HepG2 (cell line): ENCODE measurements at regions of chr6 and their contacts with region 1.

Region 1: DNA sequence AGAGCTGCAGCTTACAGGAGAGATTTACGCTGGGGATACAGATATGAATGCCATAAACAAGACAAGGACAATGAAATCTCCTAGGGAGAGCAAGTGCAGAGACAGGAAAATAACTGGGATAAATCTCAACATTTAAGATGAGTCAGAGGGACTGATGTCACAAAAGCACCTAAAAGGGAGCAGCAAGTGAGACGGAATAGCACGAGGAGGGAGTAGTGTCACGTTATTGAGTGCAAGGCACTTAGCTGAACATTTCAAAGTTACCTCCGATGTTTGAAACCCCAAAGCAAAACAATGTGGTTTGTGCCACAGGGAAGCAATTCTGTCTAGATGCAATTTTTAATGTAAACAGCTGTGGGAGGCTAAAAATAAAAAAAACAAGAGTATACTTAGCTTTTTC is 1131.7 kb upstream of the EYS start:
- DNase-seq: no peak
- ATAC-seq: no peak
- H3K4me3 ChIP-seq: no peak overlapping the region
- H3K27ac ChIP-seq: no peak overlapping the region
- H3K4me1 ChIP-seq: no peaks in the 10 kb centered on the region
- H3K27me3 ChIP-seq: no peaks in the 10 kb centered on the region
- CTCF ChIP-seq: no peak
- EP300 ChIP-seq: no peak
- POLR2A ChIP-seq: no peak
- RAD21 ChIP-seq: no peak

Region 2: DNA sequence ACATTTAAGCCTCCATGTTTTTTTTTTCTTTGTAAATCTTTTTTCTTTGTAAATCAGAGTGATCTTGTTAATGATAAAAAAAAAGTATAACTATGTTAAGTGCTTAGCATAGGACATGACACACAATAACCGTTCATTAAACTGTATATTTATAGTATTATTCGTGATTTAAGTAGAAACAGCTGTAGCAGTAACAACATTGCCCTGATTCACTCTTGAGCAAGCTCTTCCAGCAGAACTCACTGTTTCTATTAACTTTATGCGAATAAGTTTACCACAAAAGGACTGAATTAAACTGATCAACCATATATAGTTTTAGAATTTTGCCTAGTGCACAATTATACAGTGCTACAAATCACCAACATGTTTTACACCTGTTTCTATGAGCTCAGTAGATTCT is 206.3 kb after region 1 on chr6:
- CTCF ChIA-PET with region 1: no interaction called
- POLR2A ChIA-PET with region 1: no interaction called
- in situ Hi-C with region 1: no loop called
- intact Hi-C with region 1: loop called (anchors 5 kb)
- DNase-seq: no peak
- ATAC-seq: no peak
- H3K4me3 ChIP-seq: no peak overlapping the region
- H3K27ac ChIP-seq: no peak overlapping the region
- H3K4me1 ChIP-seq: no peaks in the 10 kb centered on the region
- H3K27me3 ChIP-seq: no peaks in the 10 kb centered on the region
- CTCF ChIP-seq: no peak
- EP300 ChIP-seq: no peak
- POLR2A ChIP-seq: no peak
- RAD21 ChIP-seq: no peak